ENCODE measurements at regions of chr19 and their contacts with region 1.

Region 1: GRCh38 chr19:5790573-5791520 is at the start of gene DUS3L:
- DNase-seq: peak; percentile 98
- H3K4me3 Mint-ChIP-seq: peak within 1 kb of the TSS; percentile 100
- H3K27ac Mint-ChIP-seq: peak within 1 kb of the TSS; percentile 100
- H3K4me1 Mint-ChIP-seq: peaks cover 13% of the 10 kb centered on the region
- H3K27me3 Mint-ChIP-seq: no peaks in the 10 kb centered on the region
- total RNA-seq, gene DUS3L: 43.1 to 45.2 TPM

Region 2: DNA sequence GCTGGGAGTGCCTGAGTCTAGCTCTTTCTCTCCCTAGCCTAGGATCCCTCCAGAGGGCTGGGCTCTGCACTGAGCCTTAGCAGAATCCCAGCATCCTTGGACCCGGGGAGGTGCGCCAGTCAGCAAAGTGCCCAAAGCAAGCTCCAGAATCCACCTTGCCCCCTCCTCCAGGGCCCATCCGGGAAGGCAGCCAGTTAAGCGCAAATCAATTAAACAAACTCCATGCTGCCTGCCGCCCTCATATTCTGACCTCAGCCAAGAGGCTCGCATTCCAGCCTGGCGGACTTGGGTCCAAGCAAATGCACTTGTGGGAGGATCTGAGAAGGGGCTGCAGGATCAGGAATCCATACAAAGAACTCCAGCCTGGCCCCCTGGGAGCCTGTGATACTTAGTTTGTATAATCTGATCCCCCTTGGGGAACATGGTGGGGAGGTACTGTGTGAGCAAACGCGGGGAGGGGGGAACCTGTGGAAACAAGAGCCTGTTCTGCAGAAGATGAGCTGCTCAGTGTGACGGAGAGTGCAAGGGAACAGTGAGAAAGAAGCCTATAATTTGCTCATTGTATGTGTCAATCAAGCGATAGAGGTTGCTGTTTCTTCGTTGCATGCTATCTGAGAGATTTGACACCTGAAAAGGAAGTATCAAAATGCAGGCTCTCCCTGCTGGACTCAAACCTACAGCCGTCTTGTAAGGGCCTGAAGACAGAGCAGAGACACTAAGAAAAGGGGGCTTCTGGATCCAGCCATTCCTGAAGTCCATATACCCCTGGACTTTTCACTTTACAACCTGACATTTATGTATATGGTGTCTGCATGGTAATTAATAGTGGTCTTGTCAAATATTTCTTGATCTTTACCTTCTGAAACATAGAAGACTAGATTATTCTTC is 306.2 kb before region 1 on chr19:
- CTCF ChIA-PET with region 1: no interaction called
- intact Hi-C with region 1: no loop called
- DNase-seq: no peak
- H3K4me3 Mint-ChIP-seq: no peak overlapping the region
- H3K27ac Mint-ChIP-seq: no peak overlapping the region
- H3K4me1 Mint-ChIP-seq: no peaks in the 10 kb centered on the region
- H3K27me3 Mint-ChIP-seq: peaks cover 27% of the 10 kb centered on the region

Region 3: DNA sequence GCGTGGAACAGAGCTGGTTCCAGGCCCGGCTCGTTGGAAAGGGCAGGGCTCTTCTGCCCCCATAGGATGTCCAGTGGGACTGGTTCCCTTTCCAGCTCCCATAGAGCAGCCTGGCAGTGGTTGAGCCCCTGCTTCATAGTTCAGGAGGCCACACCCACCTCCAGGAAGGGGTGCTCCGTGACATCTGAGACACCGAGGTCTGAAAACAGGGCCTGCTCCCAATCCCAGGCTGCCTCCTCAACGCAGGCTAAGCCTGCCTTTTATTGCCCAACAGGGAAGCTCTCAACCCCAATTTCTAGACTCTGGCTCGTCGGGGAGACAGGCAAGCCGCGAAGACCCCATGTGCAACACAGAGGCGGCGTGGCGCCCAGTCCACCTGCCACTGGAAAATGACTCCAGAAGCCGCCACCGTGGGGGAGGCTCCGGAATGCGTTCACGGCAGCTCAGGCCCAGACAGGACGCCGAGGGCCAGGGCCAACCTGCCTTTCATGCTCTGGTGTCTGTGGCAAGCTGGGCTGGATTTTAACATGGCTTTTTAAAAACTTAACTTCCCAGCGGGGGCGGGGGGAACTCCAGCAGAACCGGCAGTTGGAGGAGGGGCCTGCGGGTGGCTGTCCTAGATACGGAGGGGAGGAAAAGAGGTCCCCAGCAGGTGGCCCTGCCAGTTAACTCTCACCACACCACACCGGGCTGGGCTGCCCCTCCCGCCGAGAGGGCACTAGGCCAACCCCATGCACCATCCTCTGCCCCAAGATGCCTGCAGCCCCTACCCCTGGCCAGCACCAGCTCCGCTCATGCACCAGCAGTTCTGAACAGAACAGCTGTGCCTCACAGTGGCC is 205.2 kb before region 1 on chr19:
- CTCF ChIA-PET with region 1: no interaction called
- intact Hi-C with region 1: loop called (anchors 10 kb)
- DNase-seq: peak; percentile 85
- H3K4me3 Mint-ChIP-seq: no peak overlapping the region
- H3K27ac Mint-ChIP-seq: peak overlapping the region; percentile 73
- H3K4me1 Mint-ChIP-seq: peaks cover 19% of the 10 kb centered on the region
- H3K27me3 Mint-ChIP-seq: no peaks in the 10 kb centered on the region

Region 4: GRCh38 chr19:5680437-5681368 is 110.1 kb before region 1 on chr19 and contains the starts of genes HSD11B1L and MICOS13:
- CTCF ChIA-PET with region 1: no interaction called
- intact Hi-C with region 1: loop called (anchors 1 kb)
- DNase-seq: peak; percentile 99
- H3K4me3 Mint-ChIP-seq: peak within 1 kb of the TSS; percentile 98
- H3K27ac Mint-ChIP-seq: peak within 1 kb of the TSS; percentile 91
- H3K4me1 Mint-ChIP-seq: peaks cover 20% of the 10 kb centered on the region
- H3K27me3 Mint-ChIP-seq: no peaks in the 10 kb centered on the region
- total RNA-seq, gene HSD11B1L: 2.6 to 3.0 TPM
- total RNA-seq, gene MICOS13: 43.3 to 44.8 TPM

Region 5: GRCh38 chr19:5719961-5720790 is 70.7 kb before region 1 on chr19 and contains the starts of genes CATSPERD and LONP1:
- CTCF ChIA-PET with region 1: interaction called, 10 read pairs
- intact Hi-C with region 1: loop called (anchors 1 kb)
- DNase-seq: peak; percentile 99
- H3K4me3 Mint-ChIP-seq: peak within 1 kb of the TSS; percentile 89
- H3K27ac Mint-ChIP-seq: peak within 1 kb of the TSS; percentile 98
- H3K4me1 Mint-ChIP-seq: peaks cover 33% of the 10 kb centered on the region
- H3K27me3 Mint-ChIP-seq: no peaks in the 10 kb centered on the region
- total RNA-seq, gene CATSPERD: not detected
- total RNA-seq, gene LONP1: 223 to 229 TPM

Region 6: DNA sequence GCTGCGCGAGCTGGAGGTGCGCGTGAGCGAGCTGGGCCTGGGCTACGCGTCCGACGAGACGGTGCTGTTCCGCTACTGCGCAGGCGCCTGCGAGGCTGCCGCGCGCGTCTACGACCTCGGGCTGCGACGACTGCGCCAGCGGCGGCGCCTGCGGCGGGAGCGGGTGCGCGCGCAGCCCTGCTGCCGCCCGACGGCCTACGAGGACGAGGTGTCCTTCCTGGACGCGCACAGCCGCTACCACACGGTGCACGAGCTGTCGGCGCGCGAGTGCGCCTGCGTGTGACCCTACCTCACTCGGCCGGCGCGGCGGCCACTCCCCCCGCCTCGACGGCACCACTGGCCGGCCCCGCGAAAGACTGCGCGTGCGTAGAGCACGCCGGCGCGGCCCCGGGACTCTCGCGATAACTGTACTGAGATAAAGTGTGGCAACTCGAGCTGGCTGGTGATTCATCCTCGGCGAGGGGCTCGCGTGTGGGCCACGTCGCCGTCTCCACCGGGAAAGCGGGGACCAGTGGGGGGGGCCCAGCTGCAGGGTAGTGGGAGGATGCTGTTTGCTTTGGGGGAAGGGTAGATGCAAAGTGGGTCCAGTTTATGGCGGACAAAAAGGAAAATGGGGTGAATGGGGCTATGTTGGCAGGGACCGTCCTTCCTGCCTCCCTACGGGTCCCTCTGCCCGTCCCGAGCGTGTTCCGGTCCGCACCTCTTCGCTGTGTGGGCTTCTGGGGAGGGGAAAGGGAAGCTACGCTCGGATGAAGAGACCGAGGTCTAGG is 37.2 kb after region 1 on chr19:
- CTCF ChIA-PET with region 1: interaction called, 7 read pairs
- intact Hi-C with region 1: loop called (anchors 1 kb)
- DNase-seq: peak; percentile 96
- H3K4me3 Mint-ChIP-seq: peak overlapping the region; percentile 99
- H3K27ac Mint-ChIP-seq: peak overlapping the region; percentile 96
- H3K4me1 Mint-ChIP-seq: peaks cover 9% of the 10 kb centered on the region
- H3K27me3 Mint-ChIP-seq: no peaks in the 10 kb centered on the region

Region 7: GRCh38 chr19:6110360-6110977 is 319.6 kb after region 1 on chr19 and contains the start of gene RFX2:
- CTCF ChIA-PET with region 1: no interaction called
- intact Hi-C with region 1: loop called (anchors 1 kb)
- DNase-seq: peak; percentile 99
- H3K4me3 Mint-ChIP-seq: peak within 1 kb of the TSS; percentile 80
- H3K27ac Mint-ChIP-seq: peak within 1 kb of the TSS; percentile 82
- H3K4me1 Mint-ChIP-seq: peaks cover 22% of the 10 kb centered on the region
- H3K27me3 Mint-ChIP-seq: peaks cover 3% of the 10 kb centered on the region
- total RNA-seq, gene RFX2: 4.7 to 6.0 TPM

Measured in activated naive CD4-positive, alpha-beta T cell treated with anti-CD3 and anti-CD28 coated beads for 36 hours (primary cell).